Heart left ventricle (tissue), 16 donors: ENCODE measurements at regions of chr19 and their contacts with region 1.

Region 1: DNA sequence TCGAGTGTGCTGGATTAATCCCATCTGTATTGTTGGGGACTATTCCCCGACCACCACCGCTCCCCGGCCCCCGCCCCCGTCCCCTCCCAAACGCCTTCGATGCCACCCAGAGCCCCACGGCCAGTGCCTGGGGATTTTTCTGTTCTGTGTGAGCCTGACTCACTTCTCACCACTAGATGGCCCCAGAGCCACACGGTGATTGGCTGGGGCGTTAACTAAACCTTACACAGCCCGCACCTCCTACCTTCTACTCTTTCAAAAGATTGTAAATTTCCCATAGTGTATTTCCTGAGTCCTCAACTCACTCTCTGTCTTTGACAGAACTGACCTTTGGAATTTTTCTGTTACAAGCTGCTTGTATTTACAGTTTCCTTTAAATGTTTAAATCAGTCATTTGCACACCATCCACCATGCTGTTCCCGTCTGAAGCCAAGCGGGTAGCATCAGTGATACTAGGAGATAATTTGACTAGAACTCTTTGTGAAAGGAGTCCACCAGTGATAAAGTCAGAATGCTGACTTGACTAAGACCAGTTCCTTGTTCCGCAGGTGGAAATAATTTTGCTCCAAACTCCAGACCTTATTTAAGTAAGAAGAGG is 61.4 kb downstream of the RFX2 start:
- DNase-seq: peak; percentile 70 to 85 (median 72)
- ATAC-seq: peak; percentile 91 to 98 (median 96)
- H3K4me3 ChIP-seq: peak overlapping the region in 1 of 12 donors; percentile 3
- H3K27ac ChIP-seq: peak overlapping the region in 1 of 12 donors; percentile 29
- H3K4me1 ChIP-seq: peaks cover 0 to 19% (median 9%) of the 10 kb centered on the region in 12 donors
- H3K27me3 ChIP-seq: no peaks in the 10 kb centered on the region
- CTCF ChIP-seq: peak; percentile 86 to 93 (median 90)
- POLR2A ChIP-seq: no peak

Region 2: DNA sequence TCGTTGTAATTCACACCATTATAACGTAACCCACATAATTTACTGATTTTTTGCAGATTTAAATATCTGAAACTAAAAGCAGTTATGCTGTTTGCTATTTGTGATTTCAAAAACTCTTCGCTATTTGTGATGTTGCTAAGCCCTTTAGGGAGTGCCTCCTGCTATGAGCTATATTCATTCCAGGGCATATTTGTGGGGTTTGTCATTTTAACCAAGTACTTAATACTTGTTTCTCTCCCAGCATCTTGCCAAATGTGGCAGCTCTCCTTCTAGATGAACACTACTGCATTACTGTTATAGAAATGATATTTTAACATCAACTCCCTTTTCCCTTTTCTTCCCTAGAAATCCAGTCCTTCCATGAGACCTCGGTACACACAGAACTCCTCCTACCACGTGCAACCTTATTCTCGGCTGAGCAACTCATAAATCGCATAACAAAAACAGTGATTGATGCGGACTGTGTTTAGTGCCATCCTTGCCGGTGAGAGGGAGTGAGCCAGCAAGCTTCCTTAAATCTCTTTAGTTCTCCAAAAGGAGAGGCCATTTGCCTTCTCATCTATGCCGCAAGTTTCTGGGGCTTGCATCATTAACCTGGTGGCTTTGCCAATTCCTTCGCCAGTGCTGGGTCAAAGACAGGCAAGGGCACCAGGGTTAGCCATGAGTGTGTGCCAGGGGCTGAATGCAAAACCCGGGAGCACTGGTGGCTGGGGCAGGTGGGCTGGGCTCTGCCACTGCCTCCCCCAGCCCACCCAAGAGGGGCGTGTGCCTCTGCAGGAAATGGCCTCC is 28.0 kb after region 1 on chr19:
- intact Hi-C with region 1: no loop called
- DNase-seq: peak in 1 of 5 donors; percentile 1
- ATAC-seq: peak in 2 of 4 donors; percentile 19 to 39
- H3K4me3 ChIP-seq: no peak overlapping the region
- H3K27ac ChIP-seq: peak overlapping the region in 3 of 12 donors; percentile 3 to 64 (median 54)
- H3K4me1 ChIP-seq: peaks cover 0 to 12% (median 0%) of the 10 kb centered on the region in 12 donors
- H3K27me3 ChIP-seq: no peaks in the 10 kb centered on the region
- CTCF ChIP-seq: no peak
- POLR2A ChIP-seq: no peak

Region 3: DNA sequence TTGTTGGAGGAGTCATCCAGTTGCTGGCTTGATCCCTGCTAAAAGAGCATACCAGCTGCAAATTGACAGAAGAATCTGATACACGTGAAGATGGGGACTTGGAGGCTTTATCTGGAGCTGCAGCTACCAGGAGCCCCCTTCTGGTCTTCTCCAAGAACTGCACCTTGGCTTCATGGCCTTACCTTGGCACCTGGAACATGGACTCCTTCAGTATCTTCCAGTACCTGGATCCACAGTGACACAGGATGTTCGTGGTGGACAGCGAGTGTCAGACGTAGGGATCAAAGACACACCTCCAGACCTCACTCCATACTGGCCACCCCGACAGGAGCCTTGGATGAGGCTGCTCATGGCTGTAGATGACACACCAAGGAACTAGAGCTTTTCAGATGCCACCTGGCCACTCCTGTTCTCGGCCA is 76.7 kb after region 1 on chr19:
- intact Hi-C with region 1: loop called (anchors 1 to 2 kb)
- DNase-seq: peak in 4 of 5 donors; percentile 48 to 57 (median 53)
- ATAC-seq: peak; percentile 61 to 87 (median 80)
- H3K4me3 ChIP-seq: no peak overlapping the region
- H3K27ac ChIP-seq: no peak overlapping the region
- H3K4me1 ChIP-seq: no peaks in the 10 kb centered on the region
- H3K27me3 ChIP-seq: no peaks in the 10 kb centered on the region
- CTCF ChIP-seq: peak; percentile 91 to 97 (median 94)
- POLR2A ChIP-seq: no peak

Region 4: GRCh38 chr19:6233827-6234511 is 185.1 kb after region 1 on chr19:
- intact Hi-C with region 1: no loop called
- DNase-seq: peak; percentile 68 to 88 (median 76)
- ATAC-seq: peak; percentile 70 to 79 (median 76)
- H3K4me3 ChIP-seq: peak overlapping the region in 6 of 12 donors; percentile 4 to 22 (median 12)
- H3K27ac ChIP-seq: peak overlapping the region; percentile 72 to 90 (median 80)
- H3K4me1 ChIP-seq: peaks cover 26 to 82% (median 62%) of the 10 kb centered on the region in 12 donors
- H3K27me3 ChIP-seq: no peaks in the 10 kb centered on the region
- CTCF ChIP-seq: no peak
- POLR2A ChIP-seq: no peak

Region 5: DNA sequence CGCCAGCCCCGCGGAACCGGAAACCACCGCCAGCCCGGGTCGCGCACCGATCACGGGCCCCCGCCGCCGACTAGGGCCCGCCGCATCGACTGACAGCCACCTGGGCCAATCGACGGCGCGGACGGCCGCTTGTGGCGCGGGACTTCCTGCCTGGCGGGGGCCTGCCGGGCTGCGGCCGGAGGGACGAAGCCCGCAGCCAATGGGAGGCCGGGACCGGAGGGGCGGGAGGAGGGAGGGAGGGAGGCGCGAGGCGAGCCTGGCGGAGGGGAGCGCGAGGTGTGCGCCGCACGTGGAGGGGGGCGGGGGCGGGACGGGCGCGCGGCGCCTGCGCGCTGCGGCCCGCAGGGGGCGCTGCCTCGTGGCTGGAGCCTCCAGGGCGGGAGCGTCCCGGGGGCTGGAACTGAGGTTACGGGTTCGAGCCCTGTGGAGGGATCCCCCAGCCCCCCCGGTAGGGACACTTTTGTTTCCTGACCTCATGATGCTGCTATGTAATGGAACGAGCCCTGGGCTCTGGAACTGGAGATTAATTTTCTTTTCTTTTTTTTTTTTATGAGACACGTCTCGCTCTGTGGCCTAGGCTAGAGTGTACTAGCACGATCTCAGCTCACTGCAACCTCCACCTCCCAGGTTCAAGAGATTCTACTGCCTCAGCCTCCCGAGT is 231.2 kb after region 1 on chr19 and contains the start of gene MLLT1:
- intact Hi-C with region 1: loop called in 1 of 10 experiments (anchors 5 kb)
- DNase-seq: peak; percentile 98 to 99 (median 98)
- ATAC-seq: peak; percentile 93 to 99 (median 98)
- H3K4me3 ChIP-seq: peak within 1 kb of the TSS; percentile 50 to 97 (median 84)
- H3K27ac ChIP-seq: peak within 1 kb of the TSS in 11 of 12 donors; percentile 44 to 90 (median 81)
- H3K4me1 ChIP-seq: peaks cover 8 to 48% (median 37%) of the 10 kb centered on the region in 12 donors
- H3K27me3 ChIP-seq: no peaks in the 10 kb centered on the region
- CTCF ChIP-seq: peak; percentile 56 to 91 (median 82)
- POLR2A ChIP-seq: peak in 1 of 2 donors; percentile 46
- total RNA-seq, gene MLLT1: 21.0 to 45.9 (median 34.9) TPM

Region 6: GRCh38 chr19:6297202-6297601 is 248.3 kb after region 1 on chr19:
- intact Hi-C with region 1: loop called in 8 of 10 experiments (anchors 2 to 10 kb)
- DNase-seq: no peak
- ATAC-seq: no peak
- H3K4me3 ChIP-seq: no peak overlapping the region
- H3K27ac ChIP-seq: no peak overlapping the region
- H3K4me1 ChIP-seq: no peaks in the 10 kb centered on the region
- H3K27me3 ChIP-seq: peaks cover 0 to 8% (median 0%) of the 10 kb centered on the region in 9 donors
- CTCF ChIP-seq: no peak
- POLR2A ChIP-seq: no peak

Region 7: GRCh38 chr19:6372594-6373095 is 323.7 kb after region 1 on chr19 and contains the start of gene ALKBH7:
- intact Hi-C with region 1: no loop called
- DNase-seq: peak; percentile 96 to 100 (median 100)
- ATAC-seq: peak; percentile 85 to 91 (median 89)
- H3K4me3 ChIP-seq: peak within 1 kb of the TSS; percentile 62 to 99 (median 74)
- H3K27ac ChIP-seq: peak within 1 kb of the TSS; percentile 87 to 100 (median 99)
- H3K4me1 ChIP-seq: peaks cover 0 to 20% (median 7%) of the 10 kb centered on the region in 12 donors
- H3K27me3 ChIP-seq: no peaks in the 10 kb centered on the region
- CTCF ChIP-seq: peak in 1 of 12 donors; percentile 25
- POLR2A ChIP-seq: peak in 1 of 2 donors; percentile 52
- total RNA-seq, gene ALKBH7: 92.4 to 214 (median 148) TPM